Stomach (tissue), 19 donors: ENCODE measurements at regions of chr3 and their contacts with region 1.

Region 1: GRCh38 chr3:16286161-16286560 is 21.1 kb downstream of the OXNAD1 start:
- DNase-seq: peak in 1 of 2 donors; percentile 55
- H3K4me3 ChIP-seq: peak overlapping the region in 1 of 4 donors; percentile 29
- H3K27ac ChIP-seq: peak overlapping the region; percentile 50 to 64 (median 56)
- H3K4me1 ChIP-seq: peaks cover 0 to 16% (median 6%) of the 10 kb centered on the region in 4 donors
- H3K27me3 ChIP-seq: no peaks in the 10 kb centered on the region
- CTCF ChIP-seq: no peak
- EP300 ChIP-seq: no peak
- POLR2A ChIP-seq: no peak

Region 2: DNA sequence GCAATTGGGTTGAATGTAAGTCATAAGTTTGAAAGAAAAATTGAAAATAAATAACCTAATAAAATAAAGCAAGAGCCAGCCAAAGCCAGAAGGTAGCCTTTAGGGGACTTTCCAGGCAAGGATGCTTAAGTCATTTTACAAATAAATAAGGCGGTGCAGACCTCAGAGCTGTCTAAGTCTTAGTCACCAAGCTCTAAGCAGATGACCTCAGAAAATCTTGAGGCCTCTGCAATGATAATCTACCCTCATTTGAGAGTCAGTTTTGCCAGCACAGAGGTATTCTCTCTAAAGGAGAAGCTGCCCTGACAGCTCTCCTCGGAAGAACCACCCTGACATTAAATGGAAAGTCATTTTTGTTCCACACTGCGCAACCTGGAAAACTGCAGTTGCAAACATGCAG is 92.8 kb after region 1 on chr3:
- intact Hi-C with region 1: no loop called
- DNase-seq: no peak
- H3K4me3 ChIP-seq: no peak overlapping the region
- H3K27ac ChIP-seq: no peak overlapping the region
- H3K4me1 ChIP-seq: peaks cover 0 to 3% (median 0%) of the 10 kb centered on the region in 4 donors
- H3K27me3 ChIP-seq: no peaks in the 10 kb centered on the region
- CTCF ChIP-seq: no peak
- EP300 ChIP-seq: no peak
- POLR2A ChIP-seq: no peak

Region 3: GRCh38 chr3:16550676-16551341 is 264.6 kb after region 1 on chr3:
- intact Hi-C with region 1: loop called (anchors 5 kb)
- DNase-seq: peak; percentile 50 to 92
- H3K4me3 ChIP-seq: no peak overlapping the region
- H3K27ac ChIP-seq: no peak overlapping the region
- H3K4me1 ChIP-seq: peaks cover 0 to 8% (median 0%) of the 10 kb centered on the region in 4 donors
- H3K27me3 ChIP-seq: no peaks in the 10 kb centered on the region
- CTCF ChIP-seq: peak in 5 of 7 experiments; percentile 74 to 83 (median 78)
- EP300 ChIP-seq: no peak
- POLR2A ChIP-seq: no peak